ENCODE measurements at regions of chr21 and their contacts with region 1.

Region 1: GRCh38 chr21:14070020-14070893 is 140.5 kb downstream of the LIPI start:
- DNase-seq: peak in 3 of 7 donors; percentile 17 to 56 (median 26)
- H3K4me3 ChIP-seq: no peak overlapping the region
- H3K27ac ChIP-seq: no peak overlapping the region
- H3K4me1 ChIP-seq: no peaks in the 10 kb centered on the region
- H3K27me3 ChIP-seq: no peaks in the 10 kb centered on the region
- CTCF ChIP-seq: no peak
- POLR2A ChIP-seq: no peak

Region 2: DNA sequence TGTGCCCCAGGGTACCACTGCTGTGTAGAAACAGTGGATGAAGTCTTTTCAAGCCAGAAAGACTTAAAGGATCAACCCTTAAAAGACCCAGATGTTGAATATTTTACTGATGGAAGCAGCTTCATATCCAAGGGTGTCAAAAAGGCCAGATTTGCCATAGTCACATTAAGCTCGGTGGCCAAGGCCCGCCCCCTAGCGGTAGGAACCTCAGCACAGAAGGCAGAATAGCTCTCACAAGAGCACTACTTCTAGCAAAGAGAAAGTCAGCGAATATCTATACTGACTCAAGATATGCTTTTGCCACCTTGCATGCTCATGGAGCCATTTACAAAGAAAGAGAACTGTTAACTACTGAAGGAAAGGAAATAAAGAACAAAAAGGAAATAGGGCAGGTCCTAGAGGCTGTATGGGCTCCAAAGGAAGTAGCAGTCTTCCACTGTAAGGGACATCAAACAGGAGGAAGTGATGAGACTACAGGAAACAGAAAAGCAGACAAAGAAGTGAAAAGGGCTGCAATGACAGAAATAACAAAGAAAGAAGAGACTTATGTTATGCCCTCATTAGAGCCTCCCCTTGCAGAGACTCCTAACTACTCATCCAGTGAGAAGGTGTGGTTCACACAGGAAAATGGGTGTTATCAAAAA is 50.0 kb after region 1 on chr21:
- intact Hi-C with region 1: no loop called
- DNase-seq: peak in 5 of 7 donors; percentile 35 to 63 (median 60)
- H3K4me3 ChIP-seq: no peak overlapping the region
- H3K27ac ChIP-seq: no peak overlapping the region
- H3K4me1 ChIP-seq: no peaks in the 10 kb centered on the region
- H3K27me3 ChIP-seq: no peaks in the 10 kb centered on the region
- CTCF ChIP-seq: peak; percentile 29 to 56 (median 36)
- POLR2A ChIP-seq: no peak

Region 3: GRCh38 chr21:14143999-14144398 is 73.7 kb after region 1 on chr21:
- intact Hi-C with region 1: loop called in 1 of 2 experiments (anchors 10 kb)
- DNase-seq: no peak
- H3K4me3 ChIP-seq: no peak overlapping the region
- H3K27ac ChIP-seq: no peak overlapping the region
- H3K4me1 ChIP-seq: no peaks in the 10 kb centered on the region
- H3K27me3 ChIP-seq: no peaks in the 10 kb centered on the region
- CTCF ChIP-seq: no peak
- POLR2A ChIP-seq: no peak

Region 4: DNA sequence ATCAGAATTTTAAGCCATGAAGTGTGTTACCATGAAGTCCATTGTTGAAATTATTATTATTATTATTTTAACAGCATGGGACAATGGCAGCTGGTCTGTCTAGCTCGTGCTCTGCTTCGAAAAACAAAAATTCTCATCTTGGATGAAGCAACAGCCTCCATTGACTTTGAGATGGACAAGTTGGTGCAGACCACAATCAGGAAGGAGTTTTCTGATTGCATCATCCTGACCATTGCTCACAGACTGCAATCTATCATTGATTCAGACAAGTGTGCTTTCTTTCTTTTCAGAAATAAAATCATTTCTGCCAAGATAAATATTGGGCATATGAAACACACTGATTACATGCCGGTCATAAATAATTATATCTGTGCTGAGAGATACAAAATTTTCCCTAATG is 291.7 kb after region 1 on chr21:
- intact Hi-C with region 1: no loop called
- DNase-seq: peak in 1 of 7 donors; percentile 10
- H3K4me3 ChIP-seq: no peak overlapping the region
- H3K27ac ChIP-seq: no peak overlapping the region
- H3K4me1 ChIP-seq: no peaks in the 10 kb centered on the region
- H3K27me3 ChIP-seq: no peaks in the 10 kb centered on the region
- CTCF ChIP-seq: no peak
- POLR2A ChIP-seq: no peak

Region 5: DNA sequence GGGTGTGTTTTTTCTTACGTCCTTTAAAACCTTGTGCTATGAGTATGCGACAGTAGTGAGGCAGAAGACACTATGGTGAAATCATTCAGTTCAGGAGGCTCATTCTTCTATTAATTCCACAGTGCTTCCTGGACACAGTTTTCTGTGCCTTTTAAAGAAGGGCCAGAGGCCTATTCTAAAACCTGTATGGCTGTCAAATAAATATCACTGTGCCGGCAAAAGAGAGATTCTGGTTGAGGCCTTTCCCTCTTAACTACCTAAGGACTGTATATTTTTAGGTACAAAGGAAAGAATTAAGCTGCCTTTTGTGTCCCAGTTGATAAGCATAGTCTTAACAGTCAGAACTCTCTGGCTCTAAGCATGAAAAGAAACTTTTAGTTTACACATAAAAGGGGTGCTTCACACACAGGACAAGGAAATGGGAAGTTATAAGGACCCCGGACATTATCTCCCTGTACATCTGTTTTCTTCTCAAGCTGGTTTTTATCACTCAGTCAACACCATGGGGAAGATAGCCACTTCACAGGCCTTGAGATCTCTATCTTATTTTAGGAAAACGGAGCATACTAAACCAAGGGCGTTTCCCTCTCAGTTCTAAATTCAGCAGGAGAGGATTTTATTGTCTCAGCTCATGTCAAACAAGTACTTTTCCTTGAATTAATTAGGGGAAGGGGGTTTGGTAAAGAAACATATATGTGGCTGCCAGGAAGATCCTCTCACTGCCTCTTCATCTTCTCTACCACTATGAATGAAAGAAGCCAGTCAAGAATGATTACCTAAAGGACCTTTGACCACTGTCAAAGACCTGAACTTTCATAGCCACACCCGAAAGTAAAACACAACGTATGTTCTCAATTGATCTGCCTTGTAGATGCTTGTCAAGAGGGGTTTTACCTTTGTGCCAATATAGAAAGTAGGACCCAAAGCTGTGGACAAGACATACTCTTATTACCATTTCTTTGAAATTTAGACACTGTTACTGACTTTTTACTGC is 384.1 kb after region 1 on chr21:
- intact Hi-C with region 1: no loop called
- DNase-seq: no peak
- H3K4me3 ChIP-seq: no peak overlapping the region
- H3K27ac ChIP-seq: no peak overlapping the region
- H3K4me1 ChIP-seq: no peaks in the 10 kb centered on the region
- H3K27me3 ChIP-seq: no peaks in the 10 kb centered on the region
- CTCF ChIP-seq: no peak
- POLR2A ChIP-seq: no peak